Mammary epithelial cell (primary cell): ENCODE measurements at regions of chr18 and their contacts with region 1.

Region 1: DNA sequence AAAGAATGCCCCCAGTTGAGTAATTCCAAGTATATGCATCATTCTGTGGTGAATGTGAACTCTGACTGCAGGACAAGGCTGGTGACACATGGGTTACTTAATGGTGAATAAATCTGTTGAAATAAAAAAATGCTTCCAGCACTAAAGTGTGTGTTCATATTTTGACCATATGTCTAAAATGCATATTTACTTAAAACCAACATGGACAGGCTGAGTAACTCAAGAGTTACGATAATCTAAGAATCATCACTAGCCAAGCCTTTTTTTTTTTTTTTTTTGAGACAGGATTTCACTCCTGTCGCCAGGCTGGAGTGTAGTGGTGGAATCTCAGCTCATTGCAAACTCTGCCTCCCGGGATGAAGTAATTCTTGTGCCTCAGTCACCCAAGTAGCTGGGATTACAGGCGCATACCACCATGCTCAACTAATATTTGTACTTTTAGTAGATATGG is 47.1 kb upstream of the CCBE1 start:
- DNase-seq: peak; percentile 83
- H3K4me3 ChIP-seq: no peak overlapping the region
- H3K27ac ChIP-seq: peak overlapping the region; percentile 25
- H3K4me1 ChIP-seq: peaks cover 28% of the 10 kb centered on the region
- H3K27me3 ChIP-seq: no peaks in the 10 kb centered on the region
- CTCF ChIP-seq: no peak

Region 2: DNA sequence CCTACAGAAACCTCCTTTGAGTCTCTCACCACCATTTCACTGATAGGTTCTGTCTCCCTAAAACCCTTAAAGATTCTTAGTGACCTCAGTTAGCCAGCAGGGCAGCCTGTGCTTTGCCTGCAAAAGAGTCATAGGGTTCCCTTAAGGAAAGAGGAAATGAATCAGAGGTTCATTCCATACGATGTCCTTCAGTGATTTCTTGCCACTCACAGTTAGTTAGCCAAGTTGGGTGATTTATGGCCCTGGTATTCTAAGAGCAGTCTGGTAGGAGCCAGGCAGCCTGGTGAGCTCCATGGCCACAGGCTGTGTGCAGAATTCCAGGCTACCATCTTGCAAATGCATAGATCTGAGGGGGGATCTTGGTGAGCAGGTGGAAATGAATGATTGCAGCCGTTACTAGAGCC is 28.3 kb before region 1 on chr18:
- CTCF ChIA-PET with region 1: no interaction called
- dilution Hi-C with region 1: no loop called
- in situ Hi-C with region 1: no loop called
- intact Hi-C with region 1: loop called (anchors 2 kb)
- DNase-seq: peak; percentile 91
- H3K4me3 ChIP-seq: no peak overlapping the region
- H3K27ac ChIP-seq: no peak overlapping the region
- H3K4me1 ChIP-seq: peaks cover 45% of the 10 kb centered on the region
- H3K27me3 ChIP-seq: no peaks in the 10 kb centered on the region
- CTCF ChIP-seq: peak; percentile 3 to 25